CD4-positive, alpha-beta T cell (primary cell): ENCODE measurements at regions of chr22 and their contacts with region 1.

Region 1: DNA sequence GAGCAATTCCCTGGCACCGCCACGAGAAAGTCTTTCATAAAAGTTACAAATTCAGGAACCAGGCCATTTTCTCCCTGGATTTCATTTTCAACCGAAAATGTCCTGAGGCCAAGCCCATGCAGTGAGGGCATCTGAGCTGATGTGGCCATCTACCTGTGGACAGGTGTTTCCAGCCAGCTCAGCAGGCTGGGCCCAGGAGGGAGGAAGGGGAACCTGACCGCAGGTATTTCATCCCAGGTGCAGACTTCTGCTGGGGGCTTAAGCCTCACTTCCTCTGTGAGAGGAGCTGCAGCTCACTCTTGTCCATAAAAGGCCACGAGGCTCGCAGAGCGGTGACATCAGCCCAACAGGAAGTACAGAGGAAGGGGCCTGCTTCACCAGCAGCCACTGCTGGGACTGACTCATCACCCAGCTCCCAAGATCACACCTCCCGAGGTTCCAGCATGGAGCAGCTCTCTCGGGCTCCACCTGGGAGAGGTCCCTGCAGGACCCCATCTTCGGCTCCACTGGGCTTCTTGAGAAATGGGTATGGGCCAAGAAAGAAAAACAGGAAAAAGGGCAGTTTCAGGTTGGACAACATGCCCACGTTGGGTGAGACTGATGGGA is 56.4 kb downstream of the MYH9 start:
- DNase-seq: peak; percentile 53 to 93 (median 76)
- ATAC-seq: peak; percentile 50
- H3K4me3 ChIP-seq: peak overlapping the region; percentile 44
- H3K4me3 Mint-ChIP-seq: peak overlapping the region; percentile 90
- H3K27ac ChIP-seq: peak overlapping the region; percentile 87 to 92
- H3K27ac Mint-ChIP-seq: peak overlapping the region; percentile 93
- H3K4me1 ChIP-seq: peaks cover 97% of the 10 kb centered on the region
- H3K4me1 Mint-ChIP-seq: peaks cover 100% of the 10 kb centered on the region
- H3K27me3 ChIP-seq: no peaks in the 10 kb centered on the region
- H3K27me3 Mint-ChIP-seq: no peaks in the 10 kb centered on the region
- CTCF ChIP-seq: no peak

Region 2: DNA sequence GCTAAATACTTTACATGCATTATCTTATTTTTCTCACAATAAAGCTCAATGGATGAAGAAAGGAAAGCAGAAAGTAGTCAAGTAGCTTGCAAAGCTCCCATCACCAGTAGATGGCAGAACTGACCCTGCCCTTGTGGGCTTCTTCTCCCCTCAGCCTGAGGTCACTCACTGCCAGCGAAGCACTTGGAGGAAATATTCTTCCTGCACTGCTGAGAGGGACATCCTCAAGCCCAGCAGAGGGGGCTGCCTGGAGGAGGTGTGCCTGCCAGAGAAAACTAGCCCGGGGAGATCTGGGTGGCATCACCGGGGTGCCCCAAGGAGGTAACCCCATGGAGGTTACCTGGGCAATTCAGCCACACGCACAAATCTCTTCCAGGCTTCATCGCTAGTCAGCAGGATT is 136.4 kb before region 1 on chr22:
- CTCF ChIA-PET with region 1: no interaction called
- POLR2A ChIA-PET with region 1: no interaction called
- intact Hi-C with region 1: no loop called
- DNase-seq: peak in 13 of 14 experiments; percentile 6 to 64 (median 23)
- ATAC-seq: peak; percentile 39
- H3K4me3 ChIP-seq: no peak overlapping the region
- H3K4me3 Mint-ChIP-seq: no peak overlapping the region
- H3K27ac ChIP-seq: no peak overlapping the region
- H3K27ac Mint-ChIP-seq: no peak overlapping the region
- H3K4me1 ChIP-seq: peaks cover 9% of the 10 kb centered on the region
- H3K4me1 Mint-ChIP-seq: peaks cover 6% of the 10 kb centered on the region
- H3K27me3 ChIP-seq: no peaks in the 10 kb centered on the region
- H3K27me3 Mint-ChIP-seq: peaks cover 18% of the 10 kb centered on the region
- CTCF ChIP-seq: peak; percentile 53

Region 3: GRCh38 chr22:36301384-36301828 is 30.0 kb before region 1 on chr22:
- CTCF ChIA-PET with region 1: interaction called, 8 read pairs
- POLR2A ChIA-PET with region 1: interaction called, 8 read pairs
- intact Hi-C with region 1: loop called in 1 of 2 experiments (anchors 5 kb)
- DNase-seq: peak; percentile 73 to 91 (median 81)
- ATAC-seq: peak; percentile 88
- H3K4me3 ChIP-seq: no peak overlapping the region
- H3K4me3 Mint-ChIP-seq: peak overlapping the region; percentile 49
- H3K27ac ChIP-seq: no peak overlapping the region
- H3K27ac Mint-ChIP-seq: peak overlapping the region; percentile 84
- H3K4me1 ChIP-seq: peaks cover 14% of the 10 kb centered on the region
- H3K4me1 Mint-ChIP-seq: peaks cover 19% of the 10 kb centered on the region
- H3K27me3 ChIP-seq: no peaks in the 10 kb centered on the region
- H3K27me3 Mint-ChIP-seq: no peaks in the 10 kb centered on the region
- CTCF ChIP-seq: peak; percentile 93

Region 4: DNA sequence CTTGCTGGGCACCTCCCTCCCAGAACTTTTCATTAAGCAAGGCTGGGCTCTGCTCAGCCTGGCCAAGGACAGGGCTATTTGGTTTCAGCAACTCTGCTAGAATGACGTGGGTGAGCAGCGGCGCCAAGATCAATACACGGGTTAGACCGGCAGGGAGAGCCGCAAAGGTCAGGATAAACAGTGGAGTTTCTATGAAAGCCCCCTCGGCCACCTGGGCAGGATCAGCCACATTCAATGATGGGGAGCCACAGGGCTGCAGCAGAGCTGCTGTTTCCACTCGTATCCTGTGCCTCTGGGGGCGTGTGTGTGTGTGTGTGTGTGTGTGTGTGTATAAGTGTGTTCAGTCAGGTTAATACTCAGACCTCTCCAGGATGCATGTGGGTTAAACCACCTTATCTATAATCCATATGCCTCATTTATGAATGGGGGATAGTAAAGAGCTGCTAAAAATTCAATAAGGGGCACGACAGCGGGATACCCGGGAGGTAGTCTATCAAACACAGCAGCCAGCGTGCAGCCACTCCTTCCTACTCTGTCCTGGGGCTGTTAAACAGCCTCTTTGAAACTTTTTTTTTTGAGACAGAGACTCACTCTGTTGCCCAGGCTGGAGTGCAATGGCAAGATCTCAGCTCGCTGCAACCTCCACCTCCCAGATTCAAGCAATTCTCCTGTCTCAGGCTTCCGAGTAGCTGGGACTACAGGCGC is 21.5 kb after region 1 on chr22:
- CTCF ChIA-PET with region 1: interaction called, 5 read pairs
- POLR2A ChIA-PET with region 1: interaction called, 1,847 read pairs
- intact Hi-C with region 1: loop called in 1 of 2 experiments (anchors 1 kb)
- DNase-seq: peak in 5 of 14 experiments; percentile 39 to 67 (median 61)
- ATAC-seq: peak; percentile 48
- H3K4me3 ChIP-seq: peak overlapping the region; percentile 16
- H3K4me3 Mint-ChIP-seq: peak overlapping the region; percentile 75
- H3K27ac ChIP-seq: peak overlapping the region; percentile 59 to 71
- H3K27ac Mint-ChIP-seq: peak overlapping the region; percentile 93
- H3K4me1 ChIP-seq: peaks cover 98% of the 10 kb centered on the region
- H3K4me1 Mint-ChIP-seq: peaks cover 91% of the 10 kb centered on the region
- H3K27me3 ChIP-seq: no peaks in the 10 kb centered on the region
- H3K27me3 Mint-ChIP-seq: no peaks in the 10 kb centered on the region
- CTCF ChIP-seq: no peak

Region 5: GRCh38 chr22:36369922-36370791 is 38.7 kb after region 1 on chr22:
- CTCF ChIA-PET with region 1: interaction called, 9 read pairs
- POLR2A ChIA-PET with region 1: interaction called, 1,847 read pairs
- intact Hi-C with region 1: loop called in 1 of 2 experiments (anchors 5 kb)
- DNase-seq: peak in 4 of 14 experiments; percentile 38 to 65 (median 62)
- ATAC-seq: peak; percentile 39
- H3K4me3 ChIP-seq: peak overlapping the region; percentile 39
- H3K4me3 Mint-ChIP-seq: peak overlapping the region; percentile 90
- H3K27ac ChIP-seq: peak overlapping the region; percentile 63 to 87
- H3K27ac Mint-ChIP-seq: peak overlapping the region; percentile 93
- H3K4me1 ChIP-seq: peaks cover 99% of the 10 kb centered on the region
- H3K4me1 Mint-ChIP-seq: peaks cover 94% of the 10 kb centered on the region
- H3K27me3 ChIP-seq: no peaks in the 10 kb centered on the region
- H3K27me3 Mint-ChIP-seq: no peaks in the 10 kb centered on the region
- CTCF ChIP-seq: no peak

Region 6: DNA sequence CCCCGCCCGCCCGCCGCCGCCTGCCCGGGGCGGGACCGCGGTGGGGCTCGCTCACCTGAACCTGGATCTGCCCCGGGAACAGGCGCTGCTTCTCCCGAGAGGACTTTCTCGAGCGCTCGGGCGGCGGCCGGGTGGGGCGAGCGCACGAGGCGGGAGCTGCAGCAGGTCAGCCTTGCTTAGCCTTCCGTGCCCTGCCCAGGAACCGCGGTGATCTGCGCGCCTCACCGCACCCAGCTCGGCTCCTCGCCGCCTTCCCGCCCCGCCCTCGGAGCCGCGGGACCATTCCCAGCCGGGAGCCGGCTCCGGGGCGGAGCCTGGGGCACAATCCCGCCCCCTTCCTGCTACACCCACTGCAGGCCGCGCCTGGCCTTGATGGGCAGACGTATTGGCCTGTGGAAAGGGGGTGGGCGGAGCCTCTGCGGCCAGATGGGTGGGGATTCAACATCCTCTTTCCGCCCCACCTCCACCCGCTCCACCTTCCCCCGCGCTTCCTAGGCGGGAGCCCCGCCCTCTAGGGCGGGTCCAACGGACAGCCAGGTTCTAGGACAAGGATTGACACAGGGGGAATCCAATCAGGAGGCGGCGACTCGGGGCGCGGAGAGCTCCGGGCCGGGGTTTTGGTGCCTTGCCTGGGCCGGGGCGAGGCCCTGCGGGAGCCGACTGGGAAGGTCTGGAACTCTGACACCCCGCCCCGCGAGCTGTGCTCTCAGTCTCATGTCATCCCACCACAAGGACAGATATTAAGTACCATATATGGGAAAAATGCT is 56.5 kb after region 1 on chr22 and contains the start of gene MYH9:
- CTCF ChIA-PET with region 1: interaction called, 4 read pairs
- POLR2A ChIA-PET with region 1: interaction called, 1,847 read pairs
- intact Hi-C with region 1: loop called (anchors 1 to 2 kb)
- DNase-seq: peak; percentile 96 to 100 (median 98)
- ATAC-seq: peak; percentile 73
- H3K4me3 ChIP-seq: peak within 1 kb of the TSS; percentile 98
- H3K4me3 Mint-ChIP-seq: peak within 1 kb of the TSS; percentile 96
- H3K27ac ChIP-seq: peak within 1 kb of the TSS; percentile 78 to 91
- H3K27ac Mint-ChIP-seq: peak within 1 kb of the TSS; percentile 93
- H3K4me1 ChIP-seq: peaks cover 36% of the 10 kb centered on the region
- H3K4me1 Mint-ChIP-seq: peaks cover 49% of the 10 kb centered on the region
- H3K27me3 ChIP-seq: no peaks in the 10 kb centered on the region
- H3K27me3 Mint-ChIP-seq: no peaks in the 10 kb centered on the region
- CTCF ChIP-seq: no peak
- total RNA-seq, gene MYH9: 901 to 925 TPM

Region 7: DNA sequence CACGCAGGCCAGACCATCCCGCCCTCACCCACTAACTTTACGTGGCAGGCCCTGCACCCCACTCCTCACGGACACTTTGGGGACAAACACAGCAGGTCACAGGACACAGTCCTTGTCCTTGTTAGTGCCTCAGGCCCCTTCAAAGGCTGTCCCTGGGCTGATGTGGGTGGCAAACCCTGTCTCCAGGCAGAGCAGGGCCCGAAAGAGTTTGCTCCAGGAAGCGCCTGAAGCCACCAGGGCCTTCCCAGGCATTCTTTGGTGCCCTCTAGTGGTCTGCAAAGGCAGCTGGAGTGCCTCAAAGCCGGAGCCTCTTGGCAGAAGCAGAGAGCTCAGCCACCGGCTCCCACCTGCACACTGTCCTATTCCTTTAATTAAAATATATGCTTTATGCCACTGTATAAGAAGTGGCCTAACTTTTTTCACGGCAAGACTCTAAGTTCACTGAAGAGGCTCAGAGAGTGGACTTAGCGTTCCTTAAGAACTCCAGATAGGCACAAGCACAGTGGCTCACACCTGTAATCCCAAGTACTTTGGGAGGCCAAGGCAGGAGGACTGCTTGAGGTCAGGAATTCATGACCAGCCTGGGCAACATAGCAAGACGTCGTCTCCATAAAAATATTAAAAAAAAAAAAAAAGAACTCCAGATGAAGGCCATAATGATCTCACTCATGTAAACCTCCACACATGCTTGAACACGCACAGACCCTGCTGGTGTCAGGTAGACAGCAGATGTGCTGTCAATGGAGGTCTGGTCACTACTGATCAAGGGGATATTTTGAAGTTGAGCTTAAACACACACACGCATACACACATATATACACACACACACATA is 139.0 kb after region 1 on chr22:
- CTCF ChIA-PET with region 1: interaction called, 14 read pairs
- POLR2A ChIA-PET with region 1: interaction called, 8 read pairs
- intact Hi-C with region 1: loop called in 1 of 2 experiments (anchors 1 kb)
- DNase-seq: peak; percentile 71 to 92 (median 78)
- ATAC-seq: peak; percentile 98
- H3K4me3 ChIP-seq: no peak overlapping the region
- H3K4me3 Mint-ChIP-seq: no peak overlapping the region
- H3K27ac ChIP-seq: no peak overlapping the region
- H3K27ac Mint-ChIP-seq: peak overlapping the region; percentile 70
- H3K4me1 ChIP-seq: peaks cover 27% of the 10 kb centered on the region
- H3K4me1 Mint-ChIP-seq: peaks cover 26% of the 10 kb centered on the region
- H3K27me3 ChIP-seq: no peaks in the 10 kb centered on the region
- H3K27me3 Mint-ChIP-seq: no peaks in the 10 kb centered on the region
- CTCF ChIP-seq: peak; percentile 89